H1 (cell line): ENCODE measurements at regions of chr11 and their contacts with region 1.

Region 1: GRCh38 chr11:46119352-46120216 is 1.7 kb downstream of the PHF21A start:
- DNase-seq: no peak
- H3K4me3 ChIP-seq: peak overlapping the region; percentile 82 to 97 (median 88)
- H3K27ac ChIP-seq: peak overlapping the region; percentile 54
- H3K4me1 ChIP-seq: peaks cover 0 to 6% (median 0%) of the 10 kb centered on the region in 4 experiments; a peak in 4 of 7 replicates
- H3K27me3 ChIP-seq: no peaks in the 10 kb centered on the region
- CTCF ChIP-seq: no peak
- EP300 ChIP-seq: no peak
- POLR2A ChIP-seq: no peak
- RAD21 ChIP-seq: no peak

Region 2: GRCh38 chr11:46036969-46037368 is 82.6 kb before region 1 on chr11:
- CTCF ChIA-PET with region 1: no interaction called
- POLR2A ChIA-PET with region 1: no interaction called
- DNase-seq: no peak
- H3K4me3 ChIP-seq: no peak overlapping the region
- H3K27ac ChIP-seq: no peak overlapping the region
- H3K4me1 ChIP-seq: no peaks in the 10 kb centered on the region
- H3K27me3 ChIP-seq: no peaks in the 10 kb centered on the region
- CTCF ChIP-seq: no peak
- EP300 ChIP-seq: no peak
- POLR2A ChIP-seq: no peak
- RAD21 ChIP-seq: no peak

Region 3: DNA sequence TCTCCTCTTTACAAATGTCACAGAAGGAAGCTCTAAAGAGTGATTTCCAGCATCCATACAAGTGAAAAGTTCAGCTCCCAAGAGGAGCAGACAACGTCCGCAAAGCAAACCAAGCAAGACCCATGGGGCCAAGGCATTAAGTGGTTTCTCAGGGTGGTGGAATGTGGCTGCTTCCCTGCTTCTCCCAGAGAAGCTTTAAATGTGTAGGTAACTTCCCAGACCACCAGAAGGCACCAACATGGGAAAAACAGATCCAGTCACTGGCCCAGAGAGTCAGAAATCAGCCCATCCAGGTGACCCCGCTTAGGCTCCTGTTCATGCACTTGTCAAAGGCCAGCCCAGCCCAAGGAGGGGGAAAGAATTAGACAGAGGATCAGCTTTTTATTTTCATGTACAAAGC is 15.0 kb after region 1 on chr11:
- CTCF ChIA-PET with region 1: interaction called, 13 read pairs
- POLR2A ChIA-PET with region 1: interaction called, 8 read pairs
- DNase-seq: no peak
- H3K4me3 ChIP-seq: no peak overlapping the region
- H3K27ac ChIP-seq: no peak overlapping the region
- H3K4me1 ChIP-seq: peaks cover 0 to 2% (median 0%) of the 10 kb centered on the region in 4 experiments; a peak in 1 of 7 replicates
- H3K27me3 ChIP-seq: no peaks in the 10 kb centered on the region
- CTCF ChIP-seq: peak in 2 of 3 experiments; percentile 49 to 53; a peak in 3 of 4 replicates
- EP300 ChIP-seq: no peak
- POLR2A ChIP-seq: no peak
- RAD21 ChIP-seq: peak; percentile 40 to 57

Region 4: DNA sequence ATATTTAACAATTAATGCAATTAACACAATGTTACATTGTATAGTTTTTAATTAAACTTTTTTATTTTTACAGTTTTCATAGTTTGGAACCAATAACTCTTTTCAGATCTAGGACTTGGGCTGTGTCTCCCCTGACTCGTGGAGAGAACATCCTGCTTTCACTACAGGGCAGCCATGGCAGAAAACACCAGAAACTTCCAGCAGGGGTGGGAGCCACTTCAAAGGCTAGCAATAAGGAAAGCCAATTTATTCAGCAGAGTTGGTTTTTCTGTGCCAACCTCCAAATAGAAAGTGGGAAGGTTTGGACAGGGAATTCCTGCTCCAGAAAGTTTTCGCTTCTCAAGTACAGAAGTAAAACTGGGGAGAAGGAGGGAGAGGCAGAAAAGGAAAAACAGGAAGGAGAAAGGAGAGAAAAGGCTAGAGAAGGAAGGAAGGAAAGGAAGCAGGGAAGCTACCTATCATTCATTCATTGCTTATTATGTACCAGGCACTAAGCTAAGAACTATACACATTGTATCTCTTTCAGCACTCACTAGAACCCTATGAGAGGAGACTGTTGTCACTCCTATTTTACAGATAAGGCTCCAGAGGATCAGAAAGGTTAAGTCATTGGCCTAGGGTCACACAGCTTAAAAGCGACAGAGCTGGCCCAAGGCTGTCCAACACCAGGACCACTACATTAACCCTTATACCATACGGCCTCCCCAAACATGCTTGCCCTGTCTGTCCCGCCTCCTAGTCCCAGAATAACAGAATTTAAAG is 103.1 kb after region 1 on chr11:
- CTCF ChIA-PET with region 1: no interaction called
- POLR2A ChIA-PET with region 1: no interaction called
- DNase-seq: no peak
- H3K4me3 ChIP-seq: no peak overlapping the region
- H3K27ac ChIP-seq: no peak overlapping the region
- H3K4me1 ChIP-seq: no peaks in the 10 kb centered on the region
- H3K27me3 ChIP-seq: no peaks in the 10 kb centered on the region
- CTCF ChIP-seq: no peak
- EP300 ChIP-seq: no peak
- POLR2A ChIP-seq: no peak
- RAD21 ChIP-seq: no peak